Body of pancreas (tissue), 4 donors: ENCODE measurements at regions of chr4 and their contacts with region 1.

Region 1: GRCh38 chr4:154314248-154314647 is 177.4 kb downstream of the DCHS2 start:
- DNase-seq: peak in 2 of 4 donors; percentile 17 to 31
- ATAC-seq: no peak
- H3K4me3 ChIP-seq: no peak overlapping the region
- H3K27ac ChIP-seq: no peak overlapping the region
- H3K4me1 ChIP-seq: no peaks in the 10 kb centered on the region
- H3K27me3 ChIP-seq: no peaks in the 10 kb centered on the region
- CTCF ChIP-seq: peak in 6 of 7 experiments; percentile 15 to 54 (median 34)
- POLR2A ChIP-seq: no peak

Region 2: GRCh38 chr4:153785910-153786721 is 528.1 kb before region 1 on chr4:
- intact Hi-C with region 1: loop called (anchors 10 kb)
- DNase-seq: no peak
- ATAC-seq: no peak
- H3K4me3 ChIP-seq: no peak overlapping the region
- H3K27ac ChIP-seq: no peak overlapping the region
- H3K4me1 ChIP-seq: peaks cover 24% of the 10 kb centered on the region
- H3K27me3 ChIP-seq: peaks cover 5 to 30% of the 10 kb centered on the region in 2 donors
- CTCF ChIP-seq: peak in 6 of 7 experiments; percentile 12 to 56 (median 47)
- POLR2A ChIP-seq: no peak